Common myeloid progenitor, CD34-positive (primary cell): ENCODE measurements at regions of chr15 and their contacts with region 1.

Region 1: GRCh38 chr15:33292717-33293307 is 18.0 kb upstream of the RYR3 start:
- DNase-seq: peak; percentile 64 to 83 (median 76)
- H3K4me3 ChIP-seq: no peak overlapping the region
- H3K27ac ChIP-seq: no peak overlapping the region
- H3K4me1 ChIP-seq: no peaks in the 10 kb centered on the region
- H3K27me3 ChIP-seq: peaks cover 0 to 3% (median 0%) of the 10 kb centered on the region in 5 experiments

Region 2: GRCh38 chr15:33675246-33675645 is 382.4 kb after region 1 on chr15:
- CTCF ChIA-PET with region 1: interaction called, 19 read pairs
- POLR2A ChIA-PET with region 1: no interaction called
- DNase-seq: peak; percentile 66 to 83 (median 80)
- H3K4me3 ChIP-seq: no peak overlapping the region
- H3K27ac ChIP-seq: no peak overlapping the region
- H3K4me1 ChIP-seq: no peaks in the 10 kb centered on the region
- H3K27me3 ChIP-seq: peaks cover 0 to 4% (median 0%) of the 10 kb centered on the region in 5 experiments

Region 3: DNA sequence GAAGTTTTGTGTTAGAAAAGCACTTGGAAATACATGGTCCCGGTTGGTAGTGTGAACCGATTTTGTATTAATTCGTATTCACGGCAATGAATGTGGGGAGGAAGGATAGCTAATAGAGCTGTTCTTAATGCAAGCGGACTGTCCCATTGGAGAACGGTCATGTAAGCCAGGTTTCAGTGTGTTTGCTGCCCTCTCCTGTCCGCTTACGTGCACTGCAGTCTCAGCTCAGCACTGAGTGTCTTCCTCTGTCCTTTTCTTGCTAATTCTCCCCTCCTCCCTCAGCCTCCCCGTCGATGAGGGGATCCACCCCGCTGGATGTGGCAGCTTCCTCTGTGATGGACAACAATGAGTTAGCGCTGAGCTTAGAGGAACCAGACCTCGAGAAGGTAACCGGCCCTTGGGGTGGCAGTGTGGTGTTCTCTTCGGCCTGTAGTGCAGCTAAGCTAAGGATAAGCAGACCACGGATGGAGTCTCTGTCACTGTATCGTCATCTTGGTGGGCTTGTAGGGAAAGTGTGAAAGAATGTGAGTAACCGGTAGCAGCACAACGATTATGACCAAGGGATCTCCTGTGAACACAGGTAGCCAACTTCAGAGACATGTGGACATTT is 408.0 kb after region 1 on chr15:
- CTCF ChIA-PET with region 1: interaction called, 71 read pairs
- POLR2A ChIA-PET with region 1: no interaction called
- DNase-seq: peak; percentile 68 to 87 (median 80)
- H3K4me3 ChIP-seq: no peak overlapping the region
- H3K27ac ChIP-seq: no peak overlapping the region
- H3K4me1 ChIP-seq: no peaks in the 10 kb centered on the region
- H3K27me3 ChIP-seq: peaks cover 0 to 4% (median 0%) of the 10 kb centered on the region in 5 experiments